GM10248 (cell line): ENCODE measurements at regions of chr1 and their contacts with region 1.

Region 1: GRCh38 chr1:30748699-30749401 is 8.7 kb downstream of the LAPTM5 start:
- DNase-seq: no peak
- CTCF ChIP-seq: no peak

Region 2: DNA sequence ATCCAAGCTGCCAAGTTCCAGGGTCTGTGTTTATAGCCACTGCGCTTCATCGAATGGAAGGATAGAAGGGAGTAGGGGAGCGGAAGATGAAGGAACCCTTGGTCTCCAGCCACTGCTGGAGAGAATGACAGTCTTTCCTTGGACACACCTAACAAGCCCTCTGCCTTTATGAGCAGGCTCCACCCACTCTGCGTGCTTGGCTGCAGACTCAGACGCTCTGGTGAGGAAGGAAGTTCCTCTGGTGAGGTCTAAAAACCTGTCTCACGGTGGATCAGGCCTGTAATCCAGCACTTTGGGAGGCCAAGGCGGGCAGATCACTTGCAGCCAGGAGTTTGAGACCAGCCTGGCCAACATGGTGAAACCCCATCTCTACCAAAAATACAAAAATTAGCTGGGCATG is 80.8 kb before region 1 on chr1:
- CTCF ChIA-PET with region 1: no interaction called
- POLR2A ChIA-PET with region 1: no interaction called
- DNase-seq: no peak
- CTCF ChIP-seq: no peak

Region 3: GRCh38 chr1:30763651-30764248 is 14.9 kb after region 1 on chr1:
- CTCF ChIA-PET with region 1: interaction called, 162 read pairs
- POLR2A ChIA-PET with region 1: interaction called, 71 read pairs
- DNase-seq: no peak
- CTCF ChIP-seq: no peak

Region 4: DNA sequence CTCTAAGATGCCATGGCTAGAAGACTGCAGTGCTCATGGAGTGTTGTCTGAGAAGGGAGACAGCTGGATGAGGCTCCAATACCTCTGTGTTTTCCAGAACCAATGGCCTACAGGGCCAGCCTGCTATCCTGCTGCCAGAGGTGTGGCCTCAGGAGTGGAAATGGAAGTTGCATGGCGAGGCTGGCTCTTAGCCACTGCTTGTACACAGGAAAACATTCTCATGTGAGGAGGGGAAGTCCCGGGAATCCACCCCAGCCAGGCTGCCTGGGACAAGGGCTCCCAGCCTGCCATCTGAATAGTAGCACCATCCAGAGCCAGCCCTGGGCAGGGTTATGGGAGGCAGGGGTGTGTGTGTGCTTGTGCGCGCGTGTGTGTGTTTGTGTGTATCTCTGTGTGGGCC is 103.2 kb after region 1 on chr1:
- CTCF ChIA-PET with region 1: no interaction called
- POLR2A ChIA-PET with region 1: no interaction called
- DNase-seq: no peak
- CTCF ChIP-seq: no peak